Naive thymus-derived CD8-positive, alpha-beta T cell (primary cell): ENCODE measurements at regions of chr16 and their contacts with region 1.

Region 1: DNA sequence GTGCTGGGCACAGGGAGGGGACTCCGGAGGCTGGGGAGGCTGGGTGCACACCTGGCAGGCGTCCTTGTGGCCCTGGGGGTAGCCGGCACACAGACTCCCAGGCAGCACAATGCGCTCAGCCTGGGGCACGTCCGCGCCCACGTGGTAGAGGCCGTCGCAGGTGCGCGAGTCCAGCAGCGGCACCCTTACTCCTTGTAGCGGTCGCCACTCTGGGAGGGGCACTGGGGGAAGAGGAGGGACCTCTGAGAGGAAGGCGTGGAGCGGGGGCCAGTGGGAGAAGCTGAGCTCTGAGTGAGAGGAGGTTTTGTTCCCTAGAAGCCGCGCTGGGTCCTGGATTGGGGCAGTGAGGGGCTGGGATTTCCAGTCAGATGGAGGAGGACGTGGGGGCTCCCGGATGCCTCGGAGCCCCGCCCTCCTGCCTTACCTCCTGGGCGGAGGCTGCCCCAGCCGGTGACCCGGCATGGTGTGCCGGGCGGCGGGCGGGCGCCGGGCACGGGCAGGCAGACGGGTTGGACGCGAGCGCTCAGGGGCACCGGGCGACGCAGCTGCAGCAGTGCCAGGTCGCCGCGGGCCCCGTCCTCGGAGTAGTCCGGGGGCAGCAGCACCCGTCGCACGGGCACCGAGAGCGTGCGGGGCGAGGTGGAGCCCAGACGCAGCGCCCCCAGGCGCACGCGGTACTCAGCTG is 2.3 kb downstream of the PRSS33 start:
- DNase-seq: peak in 6 of 10 donors; percentile 40 to 69 (median 50)
- ATAC-seq: peak; percentile 85 to 87
- H3K4me3 Mint-ChIP-seq: peak overlapping the region; percentile 80 to 92 (median 86)
- H3K27ac Mint-ChIP-seq: peak overlapping the region; percentile 53 to 92 (median 72)
- H3K4me1 Mint-ChIP-seq: peaks cover 5 to 19% (median 14%) of the 10 kb centered on the region in 4 donors
- H3K27me3 Mint-ChIP-seq: peaks cover 0 to 6% (median 1%) of the 10 kb centered on the region in 5 donors

Region 2: DNA sequence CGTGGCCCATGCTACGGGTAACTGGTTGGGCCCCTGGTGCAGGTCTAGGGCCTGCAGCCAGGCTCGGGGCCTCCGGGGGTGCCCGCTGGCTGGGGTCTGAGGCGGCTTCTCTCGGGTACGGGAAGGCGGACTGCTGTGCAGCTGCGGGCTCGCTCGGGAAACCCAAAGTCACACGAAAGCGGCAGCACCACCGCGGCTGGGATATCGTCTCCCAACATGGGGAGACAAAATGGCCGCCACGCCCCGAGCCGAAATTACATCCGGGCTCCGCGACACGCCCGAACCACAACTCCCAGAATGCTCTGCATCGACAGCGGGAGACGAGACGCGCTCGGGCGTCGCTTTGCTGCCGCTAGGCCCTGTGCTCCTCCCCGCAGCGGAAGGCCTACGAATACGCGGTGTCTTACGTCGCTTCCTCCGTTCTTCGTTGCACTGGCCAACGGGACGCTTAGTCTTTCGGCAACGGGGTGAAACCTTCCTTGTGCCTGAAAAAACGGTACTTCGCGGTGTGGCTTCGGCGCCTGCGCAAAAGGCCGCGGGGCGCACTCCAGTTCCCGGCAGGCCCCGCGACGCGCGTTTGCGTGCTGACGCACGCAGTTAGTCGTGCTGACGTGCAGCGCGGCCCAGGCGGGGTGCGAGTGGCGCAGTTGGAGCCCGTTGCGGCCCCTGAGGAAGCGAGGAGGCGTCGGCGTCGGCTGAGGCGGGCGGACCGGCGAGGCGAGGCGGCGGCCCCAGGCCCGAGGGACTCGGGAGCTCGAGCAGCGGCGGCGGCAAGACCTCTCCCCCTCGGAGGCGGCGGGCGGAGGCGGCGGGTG is 32.9 kb before region 1 on chr16 and contains the start of gene SRRM2:
- POLR2A ChIA-PET with region 1: interaction called, 128 read pairs
- DNase-seq: peak; percentile 89 to 99 (median 94)
- ATAC-seq: peak; percentile 85 to 89
- H3K4me3 Mint-ChIP-seq: peak within 1 kb of the TSS; percentile 81 to 97 (median 92)
- H3K27ac Mint-ChIP-seq: peak within 1 kb of the TSS; percentile 98 to 99 (median 99)
- H3K4me1 Mint-ChIP-seq: peaks cover 36 to 50% (median 45%) of the 10 kb centered on the region in 4 donors
- H3K27me3 Mint-ChIP-seq: no peaks in the 10 kb centered on the region
- polyA plus RNA-seq, gene SRRM2: 25.5 to 110 (median 62.4) TPM

Region 3: GRCh38 chr16:2854700-2855309 is 69.7 kb after region 1 on chr16:
- POLR2A ChIA-PET with region 1: no interaction called
- DNase-seq: no peak
- ATAC-seq: no peak
- H3K4me3 Mint-ChIP-seq: no peak overlapping the region
- H3K27ac Mint-ChIP-seq: no peak overlapping the region
- H3K4me1 Mint-ChIP-seq: peaks cover 3 to 18% (median 6%) of the 10 kb centered on the region in 4 donors
- H3K27me3 Mint-ChIP-seq: peaks cover 3 to 16% (median 4%) of the 10 kb centered on the region in 5 donors